PC-3 (cell line): ENCODE measurements at regions of chr9 and their contacts with region 1.

Region 1: DNA sequence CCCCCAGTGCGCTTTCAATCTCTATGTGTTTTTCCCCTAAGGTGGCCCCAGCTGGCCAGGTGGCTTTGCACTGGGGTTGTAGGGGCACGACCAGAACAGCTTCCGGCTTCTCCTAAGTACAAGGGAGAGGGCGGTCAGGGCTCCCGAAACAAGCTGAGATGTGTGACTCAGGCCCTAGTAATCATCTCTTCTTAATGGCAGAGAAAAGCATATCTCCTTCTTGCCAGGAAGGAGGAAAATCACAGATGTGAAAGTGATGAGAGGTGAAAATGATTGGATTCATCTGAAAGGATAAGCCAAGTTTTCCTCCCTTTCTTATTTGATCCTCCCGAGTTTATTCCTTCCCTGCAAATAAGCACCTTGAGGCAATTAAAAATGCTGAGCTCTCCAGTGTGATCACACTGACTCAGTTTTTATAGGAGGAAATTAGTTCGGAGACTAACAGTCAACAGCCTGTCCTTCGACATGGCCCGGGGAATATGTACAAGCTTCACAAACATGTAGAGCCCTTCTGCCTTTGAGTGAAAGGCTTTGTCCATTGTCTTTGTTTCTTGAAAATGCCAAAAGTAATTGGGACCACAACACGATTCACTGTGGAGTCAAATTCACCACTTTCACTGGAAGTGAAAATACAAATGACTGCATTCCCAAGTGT is 514.8 kb downstream of the PSAT1 start:
- DNase-seq: peak; percentile 60
- ATAC-seq: peak; percentile 89
- H3K4me3 ChIP-seq: no peak overlapping the region
- H3K27ac ChIP-seq: 0 out of 2 replicates have a peak overlapping the region, but pooled peaks have one; percentile 9
- H3K4me1 ChIP-seq: peaks cover 12% of the 10 kb centered on the region
- H3K27me3 ChIP-seq: no peaks in the 10 kb centered on the region
- CTCF ChIP-seq: no peak

Region 2: DNA sequence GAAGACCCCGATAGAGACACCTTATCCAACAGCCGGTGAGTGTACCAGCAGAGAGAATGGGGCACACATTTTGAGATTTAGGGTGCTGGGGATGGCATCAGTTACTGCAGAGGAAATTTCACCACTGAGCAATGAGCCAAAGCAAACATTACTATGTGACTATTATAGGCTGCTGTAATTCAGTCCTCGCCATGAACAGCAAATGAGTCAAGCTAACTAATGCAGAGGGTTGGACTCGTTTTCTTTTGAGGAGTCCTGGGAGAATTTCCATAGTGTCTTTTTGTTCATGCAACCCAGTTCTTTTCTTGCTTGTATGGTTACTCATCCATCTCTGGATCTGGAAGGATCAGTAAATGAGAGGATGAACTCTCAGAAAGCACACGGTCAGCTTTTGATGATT is 191.0 kb before region 1 on chr9:
- CTCF ChIA-PET with region 1: no interaction called
- POLR2A ChIA-PET with region 1: no interaction called
- intact Hi-C with region 1: loop called (anchors 5 kb)
- DNase-seq: peak; percentile 83
- ATAC-seq: peak; percentile 95
- H3K4me3 ChIP-seq: peak overlapping the region; percentile 42
- H3K27ac ChIP-seq: peak overlapping the region; percentile 82
- H3K4me1 ChIP-seq: peaks cover 21% of the 10 kb centered on the region
- H3K27me3 ChIP-seq: no peaks in the 10 kb centered on the region
- CTCF ChIP-seq: no peak

Region 3: GRCh38 chr9:78756813-78757510 is 54.8 kb before region 1 on chr9:
- CTCF ChIA-PET with region 1: no interaction called
- POLR2A ChIA-PET with region 1: no interaction called
- intact Hi-C with region 1: no loop called
- DNase-seq: no peak
- ATAC-seq: no peak
- H3K4me3 ChIP-seq: no peak overlapping the region
- H3K27ac ChIP-seq: no peak overlapping the region
- H3K4me1 ChIP-seq: no peaks in the 10 kb centered on the region
- H3K27me3 ChIP-seq: no peaks in the 10 kb centered on the region
- CTCF ChIP-seq: no peak

Region 4: GRCh38 chr9:78769690-78770089 is 42.1 kb before region 1 on chr9:
- CTCF ChIA-PET with region 1: no interaction called
- POLR2A ChIA-PET with region 1: no interaction called
- intact Hi-C with region 1: no loop called
- DNase-seq: no peak
- ATAC-seq: peak; percentile 38; the same call in 1 of the 2 replicates
- H3K4me3 ChIP-seq: no peak overlapping the region
- H3K27ac ChIP-seq: no peak overlapping the region
- H3K4me1 ChIP-seq: no peaks in the 10 kb centered on the region
- H3K27me3 ChIP-seq: no peaks in the 10 kb centered on the region
- CTCF ChIP-seq: no peak

Region 5: GRCh38 chr9:78866207-78867132 is 54.7 kb after region 1 on chr9:
- CTCF ChIA-PET with region 1: no interaction called
- POLR2A ChIA-PET with region 1: no interaction called
- intact Hi-C with region 1: no loop called
- DNase-seq: peak; percentile 94
- ATAC-seq: peak; percentile 79
- H3K4me3 ChIP-seq: no peak overlapping the region
- H3K27ac ChIP-seq: peak overlapping the region; percentile 94
- H3K4me1 ChIP-seq: peaks cover 33% of the 10 kb centered on the region
- H3K27me3 ChIP-seq: no peaks in the 10 kb centered on the region
- CTCF ChIP-seq: no peak